ENCODE measurements at regions of chr5 and their contacts with region 1.

Region 1: DNA sequence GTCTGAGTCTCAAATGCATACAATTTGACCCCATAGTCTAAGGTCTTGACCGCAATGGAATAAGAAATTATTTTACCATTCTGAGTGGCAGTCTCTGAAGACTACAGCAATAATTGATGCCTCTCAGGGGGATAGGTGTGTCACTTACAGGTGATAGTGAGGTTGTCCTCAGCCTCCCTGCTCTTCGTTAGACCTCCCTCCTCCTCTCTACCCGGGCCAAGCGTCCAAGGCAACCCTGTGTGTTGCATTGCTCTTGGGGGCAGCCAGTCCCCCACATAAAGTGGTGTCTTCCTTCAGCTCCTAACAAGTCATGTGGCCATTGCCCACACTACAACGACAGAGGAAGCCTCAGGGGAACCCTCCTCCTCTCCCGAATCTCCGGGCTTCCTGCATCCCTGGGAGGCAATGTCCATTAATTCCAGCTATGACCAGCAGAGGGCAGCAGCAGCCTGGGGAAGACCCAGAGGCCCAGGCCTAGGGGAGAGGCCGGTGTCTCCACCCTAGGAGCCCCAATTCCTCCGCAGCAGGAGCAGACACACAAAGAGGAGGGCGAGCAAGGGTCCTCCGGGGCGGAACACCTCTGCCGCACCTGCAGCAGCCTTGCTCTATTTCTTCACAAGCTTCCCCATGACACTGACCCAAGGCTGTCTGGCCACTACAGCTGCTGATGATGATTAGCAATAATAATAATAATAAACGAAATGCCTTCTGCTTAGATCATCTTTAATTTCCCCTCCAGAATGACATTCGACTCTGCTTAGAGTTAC is 134.8 kb downstream of the KCNIP1 start:
- DNase-seq: peak; percentile 52 to 81 (median 62)
- ATAC-seq: peak; percentile 18 to 82 (median 67)
- H3K4me3 ChIP-seq: no peak overlapping the region
- H3K27ac ChIP-seq: no peak overlapping the region
- H3K4me1 ChIP-seq: peaks cover 0 to 16% (median 11%) of the 10 kb centered on the region in 12 donors
- H3K27me3 ChIP-seq: peaks cover 0 to 3% (median 0%) of the 10 kb centered on the region in 9 donors
- CTCF ChIP-seq: peak; percentile 78 to 94 (median 88)
- POLR2A ChIP-seq: no peak

Region 2: GRCh38 chr5:170791325-170791954 is 152.8 kb after region 1 on chr5:
- intact Hi-C with region 1: loop called (anchors 1 to 10 kb)
- DNase-seq: peak in 4 of 5 donors; percentile 67 to 76 (median 72)
- ATAC-seq: peak; percentile 61 to 88 (median 78)
- H3K4me3 ChIP-seq: no peak overlapping the region
- H3K27ac ChIP-seq: peak overlapping the region in 3 of 12 donors; percentile 38 to 78 (median 47)
- H3K4me1 ChIP-seq: peaks cover 0 to 41% (median 7%) of the 10 kb centered on the region in 12 donors
- H3K27me3 ChIP-seq: no peaks in the 10 kb centered on the region
- CTCF ChIP-seq: peak; percentile 46 to 80 (median 63)
- POLR2A ChIP-seq: no peak

Region 3: GRCh38 chr5:171342362-171343111 is 703.9 kb after region 1 on chr5:
- intact Hi-C with region 1: loop called in 6 of 10 experiments (anchors 5 to 10 kb)
- DNase-seq: peak in 2 of 5 donors; percentile 14 to 31
- ATAC-seq: peak in 3 of 4 donors; percentile 61 to 70 (median 63)
- H3K4me3 ChIP-seq: no peak overlapping the region
- H3K27ac ChIP-seq: no peak overlapping the region
- H3K4me1 ChIP-seq: no peaks in the 10 kb centered on the region
- H3K27me3 ChIP-seq: peaks cover 0 to 25% (median 8%) of the 10 kb centered on the region in 9 donors
- CTCF ChIP-seq: peak; percentile 38 to 72 (median 48)
- POLR2A ChIP-seq: no peak